Activated T-helper 2 cell treated with anti-CD3 and anti-CD28 coated beads, Interferon-gamma antibody, Interleukin-2, Interleukin-4, amounts not matched to agents 10 μg/mL and 5 μg/mL and 100 μg/mL, durations not matched to agents 14 hours and 24 hours and 36 hours (primary cell): ENCODE measurements at regions of chr1 and their contacts with region 1.

Region 1: DNA sequence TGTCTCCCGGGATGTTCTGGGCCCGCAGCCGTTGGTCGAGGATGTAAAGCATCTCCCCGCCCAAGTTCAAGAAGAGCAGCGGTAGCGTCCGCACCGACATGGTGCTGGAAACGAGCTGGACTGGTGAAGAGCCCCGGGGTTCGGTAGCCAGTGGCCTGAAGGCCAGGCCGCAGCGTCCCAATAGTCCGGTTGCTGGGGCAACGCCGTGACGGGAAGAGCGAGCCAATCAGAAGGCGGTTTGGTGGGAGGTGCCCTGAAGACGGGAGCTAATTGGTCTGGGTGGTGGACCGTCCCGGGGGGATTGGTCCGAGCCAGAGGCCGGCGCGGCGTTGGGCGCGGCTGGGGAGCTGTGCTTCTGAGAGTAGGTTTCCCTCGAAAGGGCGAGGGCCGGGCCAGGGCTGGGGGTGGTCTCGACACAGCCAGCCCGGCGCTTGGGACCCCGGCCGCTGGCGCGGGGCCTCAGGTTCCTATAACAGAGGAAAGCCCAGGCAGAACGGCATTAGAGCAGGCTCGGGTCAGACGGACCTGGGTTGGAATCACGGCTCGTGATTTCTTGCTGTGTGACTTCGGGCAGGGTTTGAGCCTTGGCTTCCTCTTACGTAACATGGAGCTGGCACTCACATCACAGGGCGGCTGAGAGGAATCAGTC is at the start of gene OSCP1:
- DNase-seq: peak; percentile 85
- H3K4me3 Mint-ChIP-seq: peak within 1 kb of the TSS; percentile 77
- H3K27ac Mint-ChIP-seq: peak within 1 kb of the TSS; percentile 74
- H3K4me1 Mint-ChIP-seq: peaks cover 26% of the 10 kb centered on the region
- H3K27me3 Mint-ChIP-seq: no peaks in the 10 kb centered on the region
- total RNA-seq, gene OSCP1: 0.59 and 1.2 TPM in 2 replicates

Region 2: GRCh38 chr1:36463803-36464604 is 13.6 kb after region 1 on chr1 and contains the start of gene MRPS15:
- intact Hi-C with region 1: loop called (anchors 1 kb)
- DNase-seq: peak; percentile 93
- H3K4me3 Mint-ChIP-seq: peak within 1 kb of the TSS; percentile 99
- H3K27ac Mint-ChIP-seq: peak within 1 kb of the TSS; percentile 95
- H3K4me1 Mint-ChIP-seq: peaks cover 24% of the 10 kb centered on the region
- H3K27me3 Mint-ChIP-seq: no peaks in the 10 kb centered on the region
- total RNA-seq, gene MRPS15: 117 and 123 TPM in 2 replicates

Region 3: DNA sequence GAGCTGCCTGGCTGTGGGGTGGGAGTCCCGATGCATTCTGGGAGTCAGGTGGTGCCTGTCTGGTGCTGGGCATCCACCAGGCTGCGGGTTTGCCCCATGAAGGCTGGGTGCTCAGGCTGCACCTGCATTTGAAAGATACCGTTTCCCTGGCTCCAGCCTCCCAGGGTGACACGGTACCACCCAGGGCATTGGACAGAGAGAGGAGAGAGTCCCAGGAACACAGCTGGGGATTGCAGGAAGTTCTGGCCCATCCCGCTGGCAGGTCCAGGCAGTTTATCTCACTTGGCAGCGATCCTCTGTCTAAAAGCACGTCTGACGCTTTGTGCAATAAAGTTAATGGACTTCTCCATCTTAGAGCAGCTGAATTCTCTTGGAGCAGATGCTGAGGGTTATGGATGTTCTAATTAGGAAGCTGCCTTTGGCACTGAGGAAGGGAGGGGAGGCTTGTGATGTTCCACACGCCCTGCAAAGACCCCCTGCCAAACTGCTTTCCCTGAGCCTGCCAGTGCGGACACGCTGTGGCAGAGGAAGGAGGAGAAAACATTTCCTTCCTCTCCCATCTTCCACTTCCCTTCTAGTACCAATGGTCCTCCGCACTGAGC is 337.0 kb after region 1 on chr1:
- intact Hi-C with region 1: no loop called
- DNase-seq: no peak
- H3K4me3 Mint-ChIP-seq: no peak overlapping the region
- H3K27ac Mint-ChIP-seq: no peak overlapping the region
- H3K4me1 Mint-ChIP-seq: no peaks in the 10 kb centered on the region
- H3K27me3 Mint-ChIP-seq: no peaks in the 10 kb centered on the region